ENCODE measurements at regions of chr4 and their contacts with region 1.

Region 1: DNA sequence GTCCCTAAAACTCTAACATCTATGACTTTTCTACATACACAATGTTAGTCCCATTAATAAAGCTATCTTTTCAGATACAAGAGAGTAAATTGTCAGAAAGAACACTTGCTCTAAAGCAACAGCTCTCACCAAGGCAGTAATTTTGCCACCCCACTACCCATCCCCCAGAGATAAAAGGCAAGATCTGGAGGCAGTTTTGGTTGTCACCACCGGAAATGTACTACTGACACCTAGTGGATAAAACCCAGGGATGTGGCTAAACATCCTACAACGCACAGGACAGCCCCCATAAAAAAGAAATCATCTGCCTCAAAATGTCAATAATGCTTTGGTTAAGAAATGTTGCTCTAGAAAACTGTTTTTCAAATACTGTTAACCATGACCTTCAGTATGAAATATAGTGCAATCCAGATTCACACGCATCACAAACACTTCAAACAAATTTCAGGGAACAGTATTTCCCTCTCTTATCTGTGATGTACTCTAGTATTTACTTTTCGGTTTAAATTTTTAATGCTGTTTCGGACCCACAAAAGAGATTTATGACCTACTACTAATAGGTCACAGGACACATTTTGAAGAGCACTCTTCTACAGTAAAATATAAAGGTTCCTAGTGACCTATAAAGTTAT is 5.1 kb downstream of the FBXL5 start:
- DNase-seq: no peak
- H3K4me3 ChIP-seq: no peak overlapping the region
- H3K27ac ChIP-seq: peak overlapping the region; percentile 52 to 99 (median 96)
- H3K4me1 ChIP-seq: peaks cover 0 to 88% (median 77%) of the 10 kb centered on the region in 4 donors
- H3K27me3 ChIP-seq: no peaks in the 10 kb centered on the region
- CTCF ChIP-seq: peak; percentile 35 to 61 (median 55)
- EP300 ChIP-seq: no peak
- POLR2A ChIP-seq: no peak

Region 2: DNA sequence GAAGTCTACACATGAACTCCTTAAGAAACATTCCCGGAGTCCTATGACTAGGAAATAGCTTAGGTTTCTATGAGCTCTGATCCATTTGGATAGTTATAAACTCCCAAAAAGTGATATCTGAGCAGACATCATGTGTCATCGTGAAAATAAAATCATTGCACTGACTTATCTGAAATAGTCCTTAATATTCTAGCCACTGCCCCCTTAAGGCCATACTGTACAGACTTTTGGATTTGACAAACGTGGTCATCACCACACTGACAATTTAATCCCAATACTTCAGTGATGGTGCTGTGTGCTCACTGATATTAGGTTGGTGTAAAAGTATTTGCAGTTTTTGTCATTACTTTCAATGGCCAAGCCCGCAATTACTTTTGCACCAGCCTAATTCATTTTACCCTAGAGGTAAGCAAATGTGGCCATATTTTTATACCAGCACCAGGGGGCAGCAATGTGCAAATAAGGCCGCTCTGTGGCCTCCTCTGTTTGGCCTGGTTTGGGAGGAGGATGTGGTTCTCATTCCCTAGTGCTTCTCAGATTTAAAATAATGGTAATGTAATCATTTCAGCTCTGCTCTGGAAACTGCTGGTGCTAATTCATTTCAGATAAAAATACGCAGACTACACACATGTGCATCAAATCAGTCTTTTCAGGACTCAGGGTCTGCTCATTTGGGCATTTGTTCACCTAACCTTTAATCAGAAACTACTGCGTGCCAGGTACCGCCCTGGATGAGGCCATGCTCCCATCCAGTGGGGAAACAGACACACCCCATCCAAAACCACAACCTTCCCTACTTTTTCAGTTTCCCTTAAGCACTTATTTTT is 418.6 kb before region 1 on chr4:
- intact Hi-C with region 1: loop called (anchors 5 kb)
- DNase-seq: peak; percentile 91
- H3K4me3 ChIP-seq: no peak overlapping the region
- H3K27ac ChIP-seq: peak overlapping the region in 1 of 4 donors; percentile 51
- H3K4me1 ChIP-seq: peaks cover 0 to 45% (median 31%) of the 10 kb centered on the region in 4 donors
- H3K27me3 ChIP-seq: no peaks in the 10 kb centered on the region
- CTCF ChIP-seq: peak; percentile 72 to 77 (median 73)
- EP300 ChIP-seq: no peak
- POLR2A ChIP-seq: no peak

Region 3: GRCh38 chr4:15536552-15537499 is 113.2 kb before region 1 on chr4:
- intact Hi-C with region 1: loop called (anchors 5 kb)
- DNase-seq: no peak
- H3K4me3 ChIP-seq: no peak overlapping the region
- H3K27ac ChIP-seq: peak overlapping the region; percentile 16 to 56 (median 31)
- H3K4me1 ChIP-seq: peaks cover 0 to 16% (median 2%) of the 10 kb centered on the region in 4 donors
- H3K27me3 ChIP-seq: no peaks in the 10 kb centered on the region
- CTCF ChIP-seq: no peak
- EP300 ChIP-seq: no peak
- POLR2A ChIP-seq: no peak